Esophagus muscularis mucosa (tissue), 4 donors: ENCODE measurements at regions of chr2 and their contacts with region 1.

Region 1: DNA sequence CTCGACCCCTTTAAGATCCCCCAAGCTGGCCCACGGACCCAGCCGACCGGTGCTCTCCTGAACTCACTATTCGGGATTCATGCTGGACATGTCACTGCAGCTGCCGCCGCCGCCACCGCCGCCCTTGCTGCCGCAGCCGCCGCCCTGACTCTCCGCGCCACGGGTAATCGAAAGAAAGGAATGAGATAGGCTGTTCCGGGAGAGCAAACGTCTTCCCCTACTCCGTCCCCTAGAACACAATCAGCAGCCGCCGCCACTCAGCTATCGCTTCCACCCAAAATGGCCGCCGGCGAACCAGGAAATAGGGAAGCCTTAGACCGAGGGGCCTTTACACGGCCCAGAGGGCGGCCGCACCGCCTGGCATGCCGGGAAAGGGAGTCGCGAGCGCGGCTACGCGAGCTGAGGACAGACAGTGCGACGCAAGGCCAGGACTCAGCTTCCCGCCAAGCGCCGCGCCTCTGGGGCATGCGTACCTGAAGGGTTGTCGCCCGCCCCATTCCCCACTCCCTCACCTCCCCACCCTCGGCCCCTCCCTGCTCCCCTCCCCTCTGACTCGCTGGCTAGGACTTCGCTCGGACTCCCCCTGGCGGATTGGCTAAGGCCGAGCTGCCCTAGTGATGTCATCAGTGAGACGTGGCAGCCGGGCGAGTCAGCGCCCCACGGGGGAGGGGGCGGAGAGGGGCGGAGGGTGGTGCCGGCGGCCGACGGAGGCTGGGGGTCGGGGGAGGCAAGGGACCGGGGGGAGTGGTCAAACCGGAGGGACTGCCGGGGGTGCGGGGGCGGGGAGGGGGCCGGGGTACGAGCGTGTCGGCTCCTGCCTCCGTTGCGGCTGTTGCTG is at the start of gene RAB1A:
- DNase-seq: peak; percentile 100
- H3K4me3 ChIP-seq: peak within 1 kb of the TSS; percentile 66 to 98 (median 94)
- H3K27ac ChIP-seq: peak within 1 kb of the TSS; percentile 94 to 100 (median 98)
- H3K4me1 ChIP-seq: peaks cover 31 to 47% (median 44%) of the 10 kb centered on the region in 4 donors
- H3K27me3 ChIP-seq: no peaks in the 10 kb centered on the region
- CTCF ChIP-seq: peak; percentile 24 to 51 (median 39)
- EP300 ChIP-seq: no peak
- POLR2A ChIP-seq: peak; percentile 92
- total RNA-seq, gene RAB1A: 72.1 to 91.4 (median 86.0) TPM

Region 2: DNA sequence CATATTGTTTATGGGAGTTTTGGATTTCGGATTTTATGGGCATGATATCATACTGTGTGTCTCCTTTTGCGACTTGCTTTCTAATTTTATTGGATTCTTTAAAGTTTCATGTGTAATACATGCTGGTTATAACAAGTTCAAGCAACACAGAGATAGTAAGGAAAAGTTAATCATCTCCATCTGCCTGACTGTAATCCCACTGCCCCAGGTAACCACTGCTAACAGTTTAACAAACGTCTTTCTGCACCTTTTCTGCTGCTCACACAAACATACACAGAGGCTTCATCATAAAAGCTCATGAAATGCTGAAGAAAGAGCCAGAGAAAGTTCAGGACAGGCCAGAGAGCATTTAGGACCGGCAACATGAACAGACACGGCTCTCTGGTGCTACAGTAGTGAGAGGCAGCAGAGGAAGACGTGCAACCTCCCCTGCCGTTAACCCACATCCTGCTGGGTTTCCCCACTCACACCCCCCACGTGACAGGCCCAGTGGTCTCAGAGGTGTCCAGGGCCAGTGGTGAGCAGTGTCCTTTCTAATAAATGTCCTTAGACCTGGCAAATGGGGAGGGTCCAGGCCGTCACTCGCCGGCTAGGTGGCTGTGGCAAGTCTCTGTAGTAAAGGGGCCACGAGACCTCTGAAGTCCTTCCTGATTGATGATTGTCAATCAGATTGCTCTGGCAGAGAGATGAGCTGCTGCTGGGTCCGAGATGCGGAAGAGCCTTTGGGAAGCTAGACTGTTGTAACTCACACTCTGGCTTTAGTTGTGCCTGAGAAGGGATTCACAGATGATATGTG is 183.9 kb before region 1 on chr2:
- intact Hi-C with region 1: no loop called
- DNase-seq: peak; percentile 93
- H3K4me3 ChIP-seq: no peak overlapping the region
- H3K27ac ChIP-seq: no peak overlapping the region
- H3K4me1 ChIP-seq: peaks cover 0 to 18% (median 2%) of the 10 kb centered on the region in 4 donors
- H3K27me3 ChIP-seq: no peaks in the 10 kb centered on the region
- CTCF ChIP-seq: no peak
- EP300 ChIP-seq: no peak
- POLR2A ChIP-seq: no peak

Region 3: DNA sequence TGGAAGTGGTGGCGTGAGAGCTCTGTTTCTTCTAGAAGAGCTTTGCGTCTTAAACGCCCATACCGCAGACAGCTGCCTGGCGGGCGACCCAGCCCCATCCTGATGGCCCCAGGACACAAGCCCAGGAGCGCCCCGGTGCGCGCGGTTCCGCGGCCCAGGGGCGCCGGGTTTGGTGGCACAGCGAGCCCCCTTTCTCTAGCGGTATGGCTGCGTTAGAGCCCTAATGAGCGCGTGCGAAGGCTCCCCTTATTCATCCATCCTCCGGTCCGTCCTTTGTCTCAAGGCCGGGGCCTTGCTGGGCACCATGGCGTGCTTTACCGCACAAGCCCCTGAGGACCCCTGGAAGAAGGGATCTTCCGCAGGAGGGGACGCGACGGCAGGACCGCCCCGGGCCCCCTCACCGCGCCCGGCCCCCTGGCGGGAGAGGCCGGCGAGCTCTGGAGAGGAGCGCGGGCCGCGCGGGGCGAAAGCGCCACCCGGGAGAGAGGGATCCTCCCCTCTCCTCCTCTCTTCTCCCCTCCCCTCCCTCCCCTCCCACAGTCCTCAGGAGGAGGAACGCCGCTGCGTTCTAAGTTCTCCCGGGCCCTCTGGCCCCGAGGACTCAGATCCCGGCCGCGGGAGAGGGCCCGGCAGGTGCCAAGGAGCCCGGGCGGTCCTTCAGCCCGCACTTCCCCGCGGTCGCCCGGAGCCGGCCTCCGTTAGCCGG is 141.5 kb before region 1 on chr2:
- intact Hi-C with region 1: loop called (anchors 10 kb)
- DNase-seq: peak; percentile 93
- H3K4me3 ChIP-seq: peak overlapping the region; percentile 66 to 92 (median 85)
- H3K27ac ChIP-seq: peak overlapping the region; percentile 94 to 99 (median 96)
- H3K4me1 ChIP-seq: peaks cover 17 to 46% (median 37%) of the 10 kb centered on the region in 4 donors
- H3K27me3 ChIP-seq: no peaks in the 10 kb centered on the region
- CTCF ChIP-seq: peak; percentile 20 to 53 (median 39)
- EP300 ChIP-seq: no peak
- POLR2A ChIP-seq: peak; percentile 67

Region 4: DNA sequence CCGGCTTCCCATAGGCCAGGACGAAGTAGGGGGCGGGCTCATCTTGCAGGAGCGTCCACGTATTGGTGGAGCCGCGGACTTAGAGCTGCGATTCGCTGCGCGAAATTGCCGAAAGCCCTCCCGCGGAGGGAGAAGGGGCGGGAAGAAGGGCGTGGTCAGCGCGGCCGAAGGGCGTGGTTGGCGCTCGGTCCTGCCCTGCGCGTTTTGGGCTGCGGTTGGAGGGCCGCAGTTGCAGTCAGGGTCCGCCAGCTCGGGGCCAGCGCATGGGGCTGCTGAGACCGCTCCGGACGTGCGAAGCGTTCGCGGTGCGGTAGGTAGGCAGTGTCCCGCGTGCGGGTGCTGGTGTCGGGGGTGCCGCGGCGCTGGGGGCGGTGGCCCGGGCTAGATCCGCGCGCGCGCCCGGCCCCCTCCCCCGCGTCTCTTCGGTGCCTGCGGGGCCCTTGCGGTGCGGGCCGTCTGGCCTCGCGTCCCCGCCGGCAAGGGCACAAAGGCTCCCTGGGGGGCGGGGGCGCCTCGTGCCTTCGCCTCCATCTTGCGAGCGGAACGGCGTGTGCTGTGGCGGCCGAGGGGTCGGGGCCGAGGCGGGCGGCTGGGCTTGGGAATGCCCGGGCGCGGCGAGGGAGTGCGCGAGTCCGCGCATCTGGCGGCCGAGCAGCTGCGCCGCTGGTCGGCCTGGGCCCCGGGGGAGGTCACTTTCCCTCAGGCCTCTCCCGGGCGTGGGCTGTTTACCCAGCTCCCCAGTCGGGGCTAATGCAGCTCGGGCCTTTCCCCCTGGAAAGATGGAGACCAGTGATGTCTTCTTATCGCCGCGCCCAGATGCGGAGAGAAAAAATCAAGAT is 73.6 kb before region 1 on chr2 and contains the start of gene CEP68:
- intact Hi-C with region 1: loop called (anchors 5 kb)
- DNase-seq: peak; percentile 99
- H3K4me3 ChIP-seq: peak within 1 kb of the TSS; percentile 83 to 94 (median 88)
- H3K27ac ChIP-seq: peak within 1 kb of the TSS; percentile 85 to 97 (median 93)
- H3K4me1 ChIP-seq: peaks cover 47 to 54% (median 52%) of the 10 kb centered on the region in 4 donors
- H3K27me3 ChIP-seq: no peaks in the 10 kb centered on the region
- CTCF ChIP-seq: peak in 1 of 3 experiments; percentile 10
- EP300 ChIP-seq: no peak
- POLR2A ChIP-seq: peak; percentile 92
- total RNA-seq, gene CEP68: 21.6 to 39.3 (median 28.6) TPM

Region 5: DNA sequence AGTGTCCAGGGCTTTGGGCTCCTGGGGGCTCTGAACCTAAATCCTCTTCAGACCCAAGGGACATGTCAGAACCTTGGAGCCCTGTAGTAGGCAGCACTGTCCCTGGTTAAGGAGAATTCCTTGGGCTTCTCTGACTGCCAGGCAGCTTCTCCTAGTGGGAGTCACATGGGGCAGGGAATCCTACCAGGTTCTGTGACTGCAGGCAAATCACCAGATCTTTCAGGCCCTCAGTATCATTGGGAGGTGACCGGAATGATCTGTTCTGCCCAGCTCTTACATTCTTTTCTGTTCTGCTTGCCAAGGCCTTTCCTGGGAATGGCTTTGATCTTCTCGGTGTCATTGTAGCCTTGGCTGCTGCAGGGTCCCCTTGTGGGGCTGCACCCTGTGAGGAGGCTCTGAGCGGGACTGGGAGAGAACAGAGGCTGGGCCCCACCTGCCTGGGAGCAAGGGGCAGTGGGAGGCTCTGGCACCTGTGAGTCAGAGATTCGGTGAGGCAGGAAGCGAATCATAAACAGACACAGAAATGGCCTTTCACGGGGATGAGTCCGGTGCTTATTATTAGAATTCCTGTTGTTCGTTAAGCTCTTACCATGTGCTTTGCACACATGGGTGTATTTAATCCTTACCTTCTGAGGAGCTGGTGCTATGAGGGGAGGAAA is 59.7 kb before region 1 on chr2:
- intact Hi-C with region 1: loop called (anchors 5 kb)
- DNase-seq: no peak
- H3K4me3 ChIP-seq: no peak overlapping the region
- H3K27ac ChIP-seq: peak overlapping the region; percentile 61 to 70 (median 66)
- H3K4me1 ChIP-seq: peaks cover 68 to 83% (median 73%) of the 10 kb centered on the region in 4 donors
- H3K27me3 ChIP-seq: no peaks in the 10 kb centered on the region
- CTCF ChIP-seq: peak; percentile 39 to 55 (median 52)
- EP300 ChIP-seq: no peak
- POLR2A ChIP-seq: no peak